PC-3 (cell line): ENCODE measurements at regions of chr3 and their contacts with region 1.

Region 1: GRCh38 chr3:98022978-98023820 is 11.9 kb downstream of the GABRR3 start:
- DNase-seq: peak; percentile 88
- ATAC-seq: peak; percentile 91
- H3K4me3 ChIP-seq: no peak overlapping the region
- H3K27ac ChIP-seq: no peak overlapping the region
- H3K4me1 ChIP-seq: no peaks in the 10 kb centered on the region
- H3K27me3 ChIP-seq: peaks cover 9% of the 10 kb centered on the region; the same call in 1 of the 2 replicates
- CTCF ChIP-seq: peak; percentile 99

Region 2: DNA sequence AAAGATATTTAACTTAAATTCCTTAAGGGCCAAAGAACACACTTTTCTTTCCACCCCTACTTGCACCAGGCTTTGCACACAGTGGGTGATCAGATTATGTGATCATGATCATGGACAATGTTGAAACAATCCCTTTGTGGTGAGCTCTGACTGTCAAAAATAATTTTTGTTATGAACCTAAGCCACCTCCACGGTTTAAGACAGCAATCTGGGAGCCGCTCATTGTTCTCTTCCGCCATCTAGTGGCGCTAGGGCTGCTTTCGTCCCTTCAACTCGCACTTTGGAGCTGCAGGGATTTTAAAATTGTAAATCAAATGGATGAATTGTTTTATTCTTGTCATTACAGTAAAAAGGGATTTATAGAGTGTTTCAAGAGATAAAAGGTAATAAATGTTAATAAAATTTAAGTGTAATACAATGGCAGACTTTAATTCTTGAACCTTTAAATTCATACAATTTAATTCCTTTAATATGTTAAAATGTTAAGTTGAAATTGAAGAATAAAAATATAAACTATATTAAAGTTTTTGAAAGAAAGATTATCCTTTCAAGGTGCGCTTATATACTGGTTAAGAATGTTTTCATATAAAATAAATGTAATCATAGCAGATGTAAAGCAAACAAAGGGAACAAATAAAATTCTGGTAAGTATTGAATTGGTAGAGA is 303.9 kb before region 1 on chr3:
- CTCF ChIA-PET with region 1: no interaction called
- POLR2A ChIA-PET with region 1: no interaction called
- intact Hi-C with region 1: loop called (anchors 2 kb)
- DNase-seq: peak; percentile 88
- ATAC-seq: peak; percentile 94
- H3K4me3 ChIP-seq: peak overlapping the region; percentile 37; the same call in 1 of the 2 replicates
- H3K27ac ChIP-seq: no peak overlapping the region
- H3K4me1 ChIP-seq: no peaks in the 10 kb centered on the region
- H3K27me3 ChIP-seq: no peaks in the 10 kb centered on the region
- CTCF ChIP-seq: peak; percentile 98

Region 3: DNA sequence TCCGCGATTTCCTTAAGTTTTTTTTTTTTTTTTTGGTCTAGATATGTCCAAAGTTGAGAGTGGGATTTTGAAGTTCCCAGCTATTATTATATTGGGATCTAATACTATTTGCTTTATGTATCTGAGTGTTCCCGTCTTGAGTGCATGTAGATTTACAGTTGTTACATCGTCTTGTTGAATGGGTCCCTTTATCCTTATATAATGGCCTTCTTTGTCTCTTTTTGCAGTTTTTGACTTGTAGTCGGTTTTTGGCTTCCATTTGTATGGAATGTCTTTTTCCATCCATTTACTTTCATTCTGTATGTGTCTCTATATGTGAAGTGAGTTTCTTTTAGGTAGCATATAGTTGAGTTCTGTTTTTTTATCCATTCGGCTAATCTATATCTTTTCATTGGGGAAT is 165.8 kb before region 1 on chr3:
- CTCF ChIA-PET with region 1: interaction called, 11 read pairs
- POLR2A ChIA-PET with region 1: no interaction called
- intact Hi-C with region 1: no loop called
- DNase-seq: no peak
- ATAC-seq: no peak
- H3K4me3 ChIP-seq: no peak overlapping the region
- H3K27ac ChIP-seq: no peak overlapping the region
- H3K4me1 ChIP-seq: peaks cover 3% of the 10 kb centered on the region
- H3K27me3 ChIP-seq: no peaks in the 10 kb centered on the region
- CTCF ChIP-seq: no peak

Region 4: DNA sequence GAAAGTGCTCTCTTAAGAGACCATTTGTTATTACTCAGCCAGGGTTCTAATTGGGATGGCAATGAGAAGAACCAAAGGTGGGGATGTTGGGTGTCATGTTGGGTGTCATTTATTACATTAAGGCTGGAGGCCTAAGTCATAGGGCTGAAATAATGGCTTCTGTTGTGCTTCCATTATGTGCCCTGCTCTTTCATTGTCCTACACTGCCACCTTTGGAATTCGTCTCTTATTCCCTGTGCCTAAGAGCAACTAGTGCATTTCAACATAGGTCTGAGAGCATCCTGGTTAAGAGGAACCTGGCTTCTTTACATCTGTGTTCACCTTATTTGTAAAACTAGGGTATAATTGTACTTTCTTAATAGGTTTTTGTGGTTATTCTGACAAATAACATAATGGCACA is 83.2 kb before region 1 on chr3:
- CTCF ChIA-PET with region 1: interaction called, 3 read pairs
- POLR2A ChIA-PET with region 1: no interaction called
- intact Hi-C with region 1: loop called (anchors 5 kb)
- DNase-seq: peak; percentile 19
- ATAC-seq: peak; percentile 67
- H3K4me3 ChIP-seq: no peak overlapping the region
- H3K27ac ChIP-seq: no peak overlapping the region
- H3K4me1 ChIP-seq: no peaks in the 10 kb centered on the region
- H3K27me3 ChIP-seq: no peaks in the 10 kb centered on the region
- CTCF ChIP-seq: peak; percentile 37; the same call in 1 of the 2 replicates

Region 5: GRCh38 chr3:97999994-98000393 is 23.2 kb before region 1 on chr3:
- CTCF ChIA-PET with region 1: interaction called, 3 read pairs
- POLR2A ChIA-PET with region 1: no interaction called
- intact Hi-C with region 1: loop called (anchors 2 kb)
- DNase-seq: no peak
- ATAC-seq: no peak
- H3K4me3 ChIP-seq: no peak overlapping the region
- H3K27ac ChIP-seq: no peak overlapping the region
- H3K4me1 ChIP-seq: no peaks in the 10 kb centered on the region
- H3K27me3 ChIP-seq: peaks cover 13% of the 10 kb centered on the region; the same call in 1 of the 2 replicates
- CTCF ChIP-seq: no peak